K562 (cell line): ENCODE measurements at regions of chr12 and their contacts with region 1.

Region 1: DNA sequence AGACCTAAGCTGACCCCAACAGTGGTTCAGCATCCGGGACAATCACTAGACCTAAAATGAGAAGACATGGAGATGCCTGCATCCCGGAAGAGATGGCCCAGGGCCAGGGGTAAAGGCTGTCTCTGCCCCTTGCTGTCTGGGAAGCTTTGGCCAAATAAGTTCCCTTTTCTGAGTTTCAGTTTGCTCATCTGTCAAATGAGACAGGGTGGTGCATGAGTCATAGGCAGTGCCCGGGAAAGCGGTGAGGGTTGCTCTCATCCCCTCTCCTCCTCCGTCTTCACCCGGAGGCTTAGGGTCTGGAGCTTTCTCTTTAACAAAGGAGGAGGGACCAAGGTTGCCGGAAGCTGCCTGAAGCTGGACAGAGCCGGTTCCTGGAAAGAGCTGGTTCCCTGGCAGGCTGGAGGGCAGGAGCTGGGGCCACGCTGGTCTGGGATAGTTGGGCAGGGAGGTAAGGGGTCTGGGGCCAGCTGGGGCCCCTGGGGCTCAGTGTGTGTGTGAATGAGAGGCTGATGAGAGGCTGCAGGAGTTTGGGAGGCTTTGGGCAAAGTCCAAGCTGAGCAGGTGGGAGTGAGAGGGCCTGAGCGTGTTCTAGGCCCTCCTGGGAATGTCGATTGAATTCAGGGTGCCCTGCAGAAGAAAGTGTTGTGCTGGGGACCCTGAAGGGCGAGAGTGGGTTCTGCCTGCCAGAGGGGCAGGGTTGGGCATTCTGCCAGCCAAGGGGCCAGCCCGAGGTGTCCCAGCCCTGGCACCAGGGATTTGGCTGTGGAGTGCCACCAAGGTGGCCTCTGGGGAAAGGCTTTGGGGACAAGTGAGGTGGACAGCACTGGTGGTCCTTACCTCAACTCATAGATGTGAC is at the start of gene SDSL:
- DNase-seq: peak; percentile 81 to 89 (median 84)
- ATAC-seq: peak; percentile 93
- H3K4me3 ChIP-seq: peak within 1 kb of the TSS; percentile 55
- H3K27ac ChIP-seq: peak within 1 kb of the TSS; percentile 96
- H3K4me1 ChIP-seq: peaks cover 28 to 32% of the 10 kb centered on the region in 2 experiments
- H3K27me3 ChIP-seq: no peaks in the 10 kb centered on the region
- CTCF ChIP-seq: no peak
- EP300 ChIP-seq: peak; percentile 76
- POLR2A ChIP-seq: peak; percentile 90
- RAD21 ChIP-seq: no peak; a peak in 1 of 4 replicates
- polyA plus RNA-seq, gene SDSL: 0.31 to 2.0 TPM

Region 2: DNA sequence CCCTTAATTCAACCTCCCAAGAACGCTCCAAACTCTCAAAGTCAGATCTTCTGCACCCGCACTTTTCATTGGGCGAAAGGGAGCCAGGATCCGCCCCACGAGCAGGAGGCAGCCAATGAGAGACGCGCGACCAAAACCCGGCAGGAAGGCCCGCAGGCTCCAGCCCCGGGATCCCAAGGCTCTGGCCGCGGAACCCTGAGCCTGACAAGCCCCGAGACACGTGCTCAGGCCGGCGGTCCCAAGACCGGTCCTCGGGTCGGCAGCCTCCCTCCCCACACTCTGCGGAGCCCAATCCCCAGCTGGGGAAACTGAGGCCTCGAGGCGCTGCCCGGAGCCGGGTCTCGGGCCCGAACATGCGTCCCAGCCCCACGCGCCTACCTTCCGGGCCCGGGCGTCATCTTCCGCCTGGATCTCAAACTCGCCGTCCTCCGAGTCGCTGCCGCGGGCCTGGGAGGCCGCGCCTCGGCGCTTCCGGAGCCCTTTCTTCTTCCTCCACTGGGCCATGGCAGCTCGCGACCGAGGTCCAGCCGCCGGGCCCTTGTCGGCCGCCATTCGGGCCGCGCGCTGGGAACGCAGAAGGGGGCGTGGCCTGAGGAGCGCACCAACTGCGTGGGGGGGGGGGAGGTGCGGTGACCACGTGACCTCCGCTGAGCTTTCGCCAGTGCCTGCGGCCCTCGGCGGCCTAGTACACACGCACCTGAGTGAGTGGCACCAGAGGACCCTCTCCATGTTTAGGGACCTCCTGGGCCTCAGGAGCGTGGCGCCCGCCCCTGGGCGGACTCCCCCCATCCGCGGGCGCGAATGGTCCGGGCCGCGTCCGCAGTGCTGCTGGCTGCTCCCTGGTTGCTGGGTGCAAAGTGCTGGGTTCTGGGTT is 237.1 kb before region 1 on chr12 and contains the starts of genes DDX54 and RITA1:
- CTCF ChIA-PET with region 1: no interaction called
- POLR2A ChIA-PET with region 1: interaction called, 4 read pairs
- in situ Hi-C with region 1: loop called (anchors 25 kb)
- intact Hi-C with region 1: no loop called
- DNase-seq: peak; percentile 92 to 97 (median 94)
- ATAC-seq: peak; percentile 94
- H3K4me3 ChIP-seq: peak within 1 kb of the TSS; percentile 91
- H3K27ac ChIP-seq: peak within 1 kb of the TSS; percentile 97
- H3K4me1 ChIP-seq: peaks cover 26 to 40% of the 10 kb centered on the region in 2 experiments; a peak in 4 of 5 replicates
- H3K27me3 ChIP-seq: no peaks in the 10 kb centered on the region
- CTCF ChIP-seq: no peak
- EP300 ChIP-seq: no peak
- POLR2A ChIP-seq: peak; percentile 94
- RAD21 ChIP-seq: no peak
- polyA plus RNA-seq, gene DDX54: 1.4 to 3.1 TPM
- polyA plus RNA-seq, gene RITA1: 2.8 to 3.5 TPM

Region 3: GRCh38 chr12:113196996-113197395 is 225.3 kb before region 1 on chr12:
- CTCF ChIA-PET with region 1: no interaction called
- POLR2A ChIA-PET with region 1: no interaction called
- in situ Hi-C with region 1: loop called (anchors 25 kb)
- intact Hi-C with region 1: loop called (anchors 2 kb)
- DNase-seq: peak; percentile 73 to 87 (median 78)
- ATAC-seq: peak; percentile 97
- H3K4me3 ChIP-seq: no peak overlapping the region
- H3K27ac ChIP-seq: no peak overlapping the region
- H3K4me1 ChIP-seq: peaks cover 2 to 21% of the 10 kb centered on the region in 2 experiments; a peak in 4 of 5 replicates
- H3K27me3 ChIP-seq: no peaks in the 10 kb centered on the region
- CTCF ChIP-seq: peak; percentile 77 to 91 (median 78)
- EP300 ChIP-seq: no peak
- POLR2A ChIP-seq: no peak
- RAD21 ChIP-seq: peak; percentile 66 to 81

Region 4: GRCh38 chr12:113310489-113310888 is 111.8 kb before region 1 on chr12:
- CTCF ChIA-PET with region 1: interaction called, 7 read pairs
- POLR2A ChIA-PET with region 1: interaction called, 3 read pairs
- in situ Hi-C with region 1: no loop called
- intact Hi-C with region 1: loop called (anchors 1 kb)
- DNase-seq: peak in 1 of 4 experiments; percentile 38
- ATAC-seq: peak; percentile 20; the same call in 2 of the 3 replicates
- H3K4me3 ChIP-seq: no peak overlapping the region
- H3K27ac ChIP-seq: no peak overlapping the region
- H3K4me1 ChIP-seq: peaks cover 10 to 11% of the 10 kb centered on the region in 2 experiments
- H3K27me3 ChIP-seq: no peaks in the 10 kb centered on the region
- CTCF ChIP-seq: no peak
- EP300 ChIP-seq: no peak
- POLR2A ChIP-seq: no peak
- RAD21 ChIP-seq: peak in 1 of 2 experiments; percentile 13; a peak in 1 of 4 replicates

Region 5: DNA sequence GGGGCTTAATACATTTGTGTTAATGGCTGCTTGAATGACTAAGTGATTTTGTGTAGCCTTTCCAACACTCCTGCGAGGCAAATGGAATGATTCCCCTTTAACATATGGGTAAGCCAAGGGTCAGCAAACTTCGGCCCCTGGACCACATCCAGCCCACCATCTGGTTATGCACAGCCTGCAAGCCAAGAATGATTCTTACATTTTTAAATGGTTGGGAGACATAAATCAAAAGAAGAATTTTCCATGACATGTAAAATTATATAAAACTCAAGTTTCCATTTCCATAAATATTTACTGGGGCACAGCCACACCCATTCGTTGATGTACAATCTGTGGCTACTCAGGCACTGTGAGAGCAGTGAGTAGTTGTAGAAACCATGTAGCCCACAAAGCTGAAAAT is 96.3 kb before region 1 on chr12:
- CTCF ChIA-PET with region 1: no interaction called
- POLR2A ChIA-PET with region 1: no interaction called
- in situ Hi-C with region 1: no loop called
- intact Hi-C with region 1: loop called (anchors 5 kb)
- DNase-seq: no peak
- ATAC-seq: no peak
- H3K4me3 ChIP-seq: no peak overlapping the region
- H3K27ac ChIP-seq: no peak overlapping the region
- H3K4me1 ChIP-seq: peaks cover 2 to 4% of the 10 kb centered on the region in 2 experiments; a peak in 3 of 5 replicates
- H3K27me3 ChIP-seq: no peaks in the 10 kb centered on the region
- CTCF ChIP-seq: no peak
- EP300 ChIP-seq: no peak
- POLR2A ChIP-seq: no peak
- RAD21 ChIP-seq: no peak

Region 6: DNA sequence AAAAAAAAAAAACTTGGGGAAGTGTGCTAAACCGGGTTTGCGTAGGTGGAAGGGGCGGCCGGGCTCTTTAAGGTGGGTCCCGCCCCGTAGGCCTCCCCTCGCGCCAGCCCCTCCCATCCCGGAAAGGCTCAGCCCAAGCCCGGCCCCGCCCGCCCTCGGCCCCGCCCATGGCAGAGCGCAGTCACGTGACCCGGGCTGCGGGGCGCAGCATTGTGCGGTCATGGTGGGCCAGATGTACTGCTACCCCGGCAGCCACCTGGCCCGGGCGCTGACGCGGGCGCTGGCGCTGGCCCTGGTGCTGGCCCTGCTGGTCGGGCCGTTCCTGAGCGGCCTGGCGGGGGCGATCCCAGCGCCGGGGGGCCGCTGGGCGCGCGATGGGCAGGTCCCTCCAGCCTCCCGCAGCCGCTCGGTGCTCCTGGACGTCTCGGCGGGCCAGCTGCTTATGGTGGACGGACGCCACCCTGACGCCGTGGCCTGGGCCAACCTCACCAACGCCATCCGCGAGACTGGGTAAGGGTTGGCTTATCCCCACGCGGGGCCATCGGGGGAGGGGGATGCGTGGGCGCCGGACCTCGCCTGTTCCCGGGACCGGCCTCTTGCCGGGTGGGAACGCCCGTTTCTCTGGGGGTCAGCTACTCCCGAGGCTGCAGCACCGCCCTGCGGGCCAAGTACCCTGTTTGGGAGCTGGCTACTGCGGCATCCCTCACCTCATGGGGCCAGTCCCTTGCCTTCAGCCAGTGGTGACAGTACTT is 63.7 kb before region 1 on chr12 and contains the start of gene PLBD2:
- CTCF ChIA-PET with region 1: no interaction called
- POLR2A ChIA-PET with region 1: no interaction called
- in situ Hi-C with region 1: no loop called
- intact Hi-C with region 1: loop called (anchors 1 kb)
- DNase-seq: peak; percentile 95 to 99 (median 99)
- ATAC-seq: peak; percentile 94
- H3K4me3 ChIP-seq: peak within 1 kb of the TSS; percentile 96
- H3K27ac ChIP-seq: peak within 1 kb of the TSS; percentile 84
- H3K4me1 ChIP-seq: peaks cover 21 to 30% of the 10 kb centered on the region in 2 experiments
- H3K27me3 ChIP-seq: no peaks in the 10 kb centered on the region
- CTCF ChIP-seq: peak in 2 of 3 experiments; percentile 17 to 24; a peak in 3 of 6 replicates
- EP300 ChIP-seq: no peak
- POLR2A ChIP-seq: no peak; the same call in none of the 2 replicates
- RAD21 ChIP-seq: peak in 1 of 2 experiments; percentile 27; a peak in 2 of 4 replicates
- polyA plus RNA-seq, gene PLBD2: 5.0 to 6.0 TPM